SK-N-SH (cell line): ENCODE measurements at regions of chr7 and their contacts with region 1.

Region 1: DNA sequence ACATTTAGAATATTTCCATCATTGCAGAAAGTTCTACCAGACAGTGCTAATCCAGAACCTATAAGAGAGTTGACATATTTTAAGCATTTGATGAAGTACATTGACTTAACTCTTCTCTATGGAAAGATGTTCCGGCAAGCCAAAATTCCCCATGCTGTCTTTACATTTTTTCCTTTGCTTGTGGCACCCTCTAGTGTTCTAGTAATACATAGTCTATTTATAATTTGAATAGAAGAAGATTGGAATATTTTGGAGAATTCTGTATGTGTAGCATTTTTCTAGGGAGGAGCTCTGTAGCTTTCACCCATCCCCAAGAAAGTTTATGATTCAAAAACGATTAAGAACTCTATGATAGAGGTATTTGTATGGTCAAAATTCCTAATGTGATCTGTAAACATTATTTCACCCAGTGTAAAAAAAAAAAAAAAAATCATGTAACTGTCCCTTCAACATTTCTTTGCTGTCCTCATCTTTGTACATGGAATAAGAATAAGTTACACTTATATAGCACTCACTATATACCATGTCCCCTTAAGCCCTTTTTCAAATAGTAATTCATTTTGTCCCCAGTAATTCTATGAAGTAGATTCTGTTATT is 33.2 kb downstream of the NRF1 start:
- DNase-seq: peak; percentile 53
- H3K4me3 ChIP-seq: no peak overlapping the region
- H3K27ac ChIP-seq: no peak overlapping the region
- H3K4me1 ChIP-seq: peaks cover 2 to 9% of the 10 kb centered on the region in 2 experiments; a peak in 2 of 4 replicates
- H3K27me3 ChIP-seq: no peaks in the 10 kb centered on the region
- CTCF ChIP-seq: peak; percentile 84
- EP300 ChIP-seq: no peak
- RAD21 ChIP-seq: peak; percentile 89

Region 2: GRCh38 chr7:129351320-129351719 is 293.4 kb before region 1 on chr7:
- CTCF ChIA-PET with region 1: interaction called, 13 read pairs
- POLR2A ChIA-PET with region 1: no interaction called
- DNase-seq: no peak
- H3K4me3 ChIP-seq: no peak overlapping the region
- H3K27ac ChIP-seq: peak overlapping the region in 1 of 2 experiments; percentile 1; a peak in 1 of 4 replicates
- H3K4me1 ChIP-seq: no peaks in the 10 kb centered on the region
- H3K27me3 ChIP-seq: no peaks in the 10 kb centered on the region
- CTCF ChIP-seq: no peak
- EP300 ChIP-seq: no peak
- RAD21 ChIP-seq: no peak

Region 3: GRCh38 chr7:129401967-129402860 is 242.5 kb before region 1 on chr7:
- CTCF ChIA-PET with region 1: no interaction called
- POLR2A ChIA-PET with region 1: no interaction called
- DNase-seq: no peak
- H3K4me3 ChIP-seq: no peak overlapping the region
- H3K27ac ChIP-seq: no peak overlapping the region
- H3K4me1 ChIP-seq: no peaks in the 10 kb centered on the region; a peak in 1 of 4 replicates
- H3K27me3 ChIP-seq: no peaks in the 10 kb centered on the region
- CTCF ChIP-seq: peak; percentile 15; the same call in 1 of the 2 replicates
- EP300 ChIP-seq: no peak
- RAD21 ChIP-seq: peak; percentile 36

Region 4: GRCh38 chr7:129468087-129468486 is 176.6 kb before region 1 on chr7:
- CTCF ChIA-PET with region 1: interaction called, 26 read pairs
- POLR2A ChIA-PET with region 1: no interaction called
- DNase-seq: no peak
- H3K4me3 ChIP-seq: no peak overlapping the region
- H3K27ac ChIP-seq: no peak overlapping the region
- H3K4me1 ChIP-seq: peaks cover 0 to 23% of the 10 kb centered on the region in 2 experiments; a peak in 2 of 4 replicates
- H3K27me3 ChIP-seq: no peaks in the 10 kb centered on the region
- CTCF ChIP-seq: no peak
- EP300 ChIP-seq: no peak
- RAD21 ChIP-seq: no peak

Region 5: DNA sequence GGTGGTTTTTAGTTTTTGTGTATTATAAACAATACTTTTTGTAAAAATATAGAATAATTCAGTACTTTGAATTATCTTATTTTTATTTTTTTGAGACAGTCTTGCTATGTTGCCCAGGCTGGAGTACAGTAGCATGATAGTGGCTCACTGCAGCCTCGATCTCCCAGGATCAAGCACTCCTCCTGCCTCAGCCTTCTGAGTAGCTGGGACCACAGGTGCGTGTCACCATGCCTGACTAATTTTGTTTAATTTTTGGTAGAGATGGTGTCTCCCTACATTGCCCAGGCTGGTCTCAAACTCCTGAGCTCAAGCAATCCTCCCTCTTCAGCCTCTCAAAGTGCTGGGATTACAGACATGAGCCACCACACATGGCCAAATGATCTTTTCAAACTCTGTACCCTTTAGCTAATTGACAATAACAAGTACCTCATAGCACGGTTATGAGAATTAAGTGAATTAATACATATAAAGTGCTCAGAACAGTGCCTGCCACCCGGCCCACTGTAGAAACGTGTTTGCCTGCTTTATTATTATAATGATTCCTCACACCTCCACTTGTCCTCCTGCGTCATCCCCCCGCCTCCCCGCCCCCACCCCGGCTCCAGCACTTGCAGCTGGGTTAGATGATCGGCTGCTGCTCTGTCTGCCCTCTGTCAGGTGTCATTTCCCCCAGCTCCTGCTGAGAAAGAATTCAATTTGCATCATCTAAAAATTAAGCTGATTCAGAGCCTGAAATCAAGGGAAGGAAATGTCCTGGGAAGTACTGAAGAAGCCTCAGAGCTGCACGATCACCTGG is 86.8 kb before region 1 on chr7:
- CTCF ChIA-PET with region 1: no interaction called
- POLR2A ChIA-PET with region 1: no interaction called
- DNase-seq: no peak
- H3K4me3 ChIP-seq: no peak overlapping the region
- H3K27ac ChIP-seq: no peak overlapping the region
- H3K4me1 ChIP-seq: no peaks in the 10 kb centered on the region; a peak in 1 of 4 replicates
- H3K27me3 ChIP-seq: no peaks in the 10 kb centered on the region
- CTCF ChIP-seq: no peak
- EP300 ChIP-seq: no peak
- RAD21 ChIP-seq: no peak

Region 6: DNA sequence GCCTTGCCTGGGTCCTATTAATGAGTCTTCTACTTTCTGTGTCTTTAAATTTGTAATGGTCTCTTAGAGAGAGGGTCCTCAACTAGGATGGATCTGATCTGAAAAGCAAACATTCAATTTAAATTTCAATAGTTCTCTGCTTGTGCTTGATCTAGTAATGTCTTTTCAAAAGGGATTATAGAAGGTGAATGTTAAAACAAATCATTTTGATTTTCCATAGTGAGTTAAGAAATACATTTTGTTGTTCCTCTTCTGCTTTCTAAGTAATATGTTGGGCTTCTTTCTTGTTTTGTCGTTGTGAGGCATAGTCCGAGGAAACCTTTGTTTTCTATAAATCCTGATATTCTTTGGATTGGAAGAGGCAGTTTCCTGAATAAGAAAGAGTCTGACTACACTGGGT is 14.4 kb before region 1 on chr7:
- CTCF ChIA-PET with region 1: interaction called, 26 read pairs
- POLR2A ChIA-PET with region 1: no interaction called
- DNase-seq: no peak
- H3K4me3 ChIP-seq: no peak overlapping the region
- H3K27ac ChIP-seq: no peak overlapping the region
- H3K4me1 ChIP-seq: no peaks in the 10 kb centered on the region
- H3K27me3 ChIP-seq: no peaks in the 10 kb centered on the region
- CTCF ChIP-seq: no peak
- EP300 ChIP-seq: no peak
- RAD21 ChIP-seq: no peak

Region 7: GRCh38 chr7:129664029-129665012 is 19.6 kb after region 1 on chr7:
- CTCF ChIA-PET with region 1: interaction called, 18 read pairs
- POLR2A ChIA-PET with region 1: no interaction called
- DNase-seq: peak; percentile 79
- H3K4me3 ChIP-seq: no peak overlapping the region
- H3K27ac ChIP-seq: peak overlapping the region; percentile 9 to 85; a peak in 3 of 4 replicates
- H3K4me1 ChIP-seq: peaks cover 5 to 9% of the 10 kb centered on the region in 2 experiments
- H3K27me3 ChIP-seq: no peaks in the 10 kb centered on the region
- CTCF ChIP-seq: peak; percentile 93
- EP300 ChIP-seq: no peak
- RAD21 ChIP-seq: peak; percentile 100